ENCODE measurements at regions of chr20 and their contacts with region 1.

Region 1: DNA sequence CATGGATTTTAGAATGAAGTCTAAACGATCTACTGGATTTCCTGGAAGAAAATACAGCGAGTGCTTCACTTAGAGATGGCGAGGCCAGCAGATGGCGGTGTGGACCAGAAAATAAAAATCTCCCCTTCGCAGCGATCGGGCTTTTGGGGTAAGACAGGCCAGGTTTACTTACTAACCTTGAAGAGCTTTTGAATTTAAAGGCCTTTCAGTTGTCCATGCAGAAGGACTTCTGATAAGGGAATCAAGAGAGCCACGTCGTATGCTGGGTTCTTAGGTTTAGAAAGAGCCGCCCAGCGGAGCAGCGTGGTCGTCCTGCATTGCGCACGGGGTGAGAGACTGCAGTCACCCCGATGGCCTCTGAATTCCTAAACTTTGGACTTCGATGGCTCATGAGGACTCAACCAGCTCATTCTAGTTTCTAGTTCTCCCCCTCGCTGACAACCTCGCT is 125.2 kb upstream of the RALGAPA2 start:
- DNase-seq: peak; percentile 59
- H3K4me3 ChIP-seq: no peak overlapping the region
- H3K27ac ChIP-seq: no peak overlapping the region
- H3K4me1 ChIP-seq: no peaks in the 10 kb centered on the region
- H3K27me3 ChIP-seq: peaks cover 0 to 3% of the 10 kb centered on the region in 2 experiments
- CTCF ChIP-seq: peak; percentile 64 to 77
- POLR2A ChIP-seq: no peak

Region 2: DNA sequence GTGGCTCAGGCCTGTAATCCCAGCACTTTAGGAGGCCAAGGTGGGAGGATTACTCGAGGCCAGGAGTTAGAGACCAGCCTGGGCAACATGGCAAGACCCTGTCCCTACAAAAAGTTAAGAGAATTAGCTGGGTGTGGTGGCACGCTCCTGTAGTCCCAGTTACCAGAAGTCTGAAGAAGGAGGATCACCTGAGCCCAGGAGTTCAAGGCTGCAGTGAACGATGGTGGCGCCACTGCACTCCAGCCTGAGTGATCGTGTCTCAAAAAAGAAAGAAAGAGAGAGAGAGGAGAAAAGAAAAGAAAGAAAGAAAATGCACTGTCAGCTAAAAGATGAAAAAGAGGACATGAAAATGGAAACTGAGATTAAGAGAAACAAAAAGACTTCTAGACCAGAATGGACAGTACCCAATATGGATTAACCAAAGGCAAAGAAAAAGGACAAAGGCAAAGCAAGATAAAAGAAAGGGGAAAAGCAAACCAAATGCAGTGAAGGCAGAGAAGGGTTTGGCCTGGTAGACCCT is 116.2 kb before region 1 on chr20:
- CTCF ChIA-PET with region 1: no interaction called
- POLR2A ChIA-PET with region 1: no interaction called
- dilution Hi-C with region 1: no loop called
- intact Hi-C with region 1: no loop called
- DNase-seq: no peak
- H3K4me3 ChIP-seq: no peak overlapping the region
- H3K27ac ChIP-seq: no peak overlapping the region
- H3K4me1 ChIP-seq: no peaks in the 10 kb centered on the region
- H3K27me3 ChIP-seq: no peaks in the 10 kb centered on the region
- CTCF ChIP-seq: no peak
- POLR2A ChIP-seq: no peak

Region 3: DNA sequence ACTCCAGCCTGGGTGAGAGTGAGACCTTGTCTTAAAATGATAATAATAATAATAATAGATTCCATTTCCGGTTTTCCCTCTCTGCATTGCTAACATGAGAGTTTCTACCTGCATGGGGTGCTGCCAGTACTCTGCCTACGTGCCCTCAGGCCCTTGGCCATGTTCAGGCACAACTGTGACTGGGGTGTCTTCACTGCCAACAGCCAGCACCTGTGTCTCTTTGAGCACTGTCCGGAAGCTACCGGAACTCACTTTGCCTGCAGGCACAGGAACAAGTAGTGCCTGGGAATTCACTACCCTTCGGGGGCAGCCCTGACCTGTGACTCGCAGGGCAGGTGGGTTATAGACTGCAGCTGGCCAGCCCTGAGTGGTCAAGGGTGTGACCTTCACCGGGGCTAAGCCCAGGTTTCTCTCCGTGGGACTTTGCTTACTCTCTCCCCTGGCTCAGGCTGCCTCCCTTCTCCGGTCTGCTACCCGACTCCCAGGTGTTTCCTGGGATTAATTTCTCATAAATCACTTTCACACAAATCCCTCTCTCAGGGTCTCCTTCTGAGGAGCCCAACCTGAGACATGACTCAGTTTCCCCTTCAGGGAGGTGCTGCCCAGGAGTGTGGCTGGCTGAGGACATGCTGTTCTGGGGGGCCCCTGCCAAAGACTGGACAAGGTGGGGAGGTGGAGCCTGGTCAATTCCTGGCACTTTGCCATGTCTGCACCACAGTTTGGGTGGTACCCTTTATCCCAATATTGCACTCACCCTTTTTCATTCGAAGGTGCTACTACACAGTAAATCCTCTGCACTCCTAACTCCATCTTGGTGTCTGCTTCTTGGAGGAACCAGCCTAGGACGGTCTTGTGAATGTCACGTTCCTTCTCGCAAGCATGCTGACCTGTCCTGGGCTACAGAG is 45.7 kb before region 1 on chr20:
- CTCF ChIA-PET with region 1: no interaction called
- POLR2A ChIA-PET with region 1: no interaction called
- dilution Hi-C with region 1: no loop called
- intact Hi-C with region 1: no loop called
- DNase-seq: no peak
- H3K4me3 ChIP-seq: no peak overlapping the region
- H3K27ac ChIP-seq: no peak overlapping the region
- H3K4me1 ChIP-seq: no peaks in the 10 kb centered on the region
- H3K27me3 ChIP-seq: peaks cover 6 to 11% of the 10 kb centered on the region in 2 experiments
- CTCF ChIP-seq: no peak
- POLR2A ChIP-seq: no peak

Region 4: GRCh38 chr20:21048841-21049273 is 211.3 kb after region 1 on chr20:
- CTCF ChIA-PET with region 1: interaction called, 3 read pairs
- POLR2A ChIA-PET with region 1: no interaction called
- dilution Hi-C with region 1: no loop called
- intact Hi-C with region 1: loop called (anchors 1 kb)
- DNase-seq: peak; percentile 10
- H3K4me3 ChIP-seq: no peak overlapping the region
- H3K27ac ChIP-seq: no peak overlapping the region
- H3K4me1 ChIP-seq: no peaks in the 10 kb centered on the region
- H3K27me3 ChIP-seq: peaks cover 0 to 2% of the 10 kb centered on the region in 2 experiments
- CTCF ChIP-seq: peak; percentile 73 to 81
- POLR2A ChIP-seq: no peak

Region 5: GRCh38 chr20:21571841-21572690 is 734.5 kb after region 1 on chr20:
- CTCF ChIA-PET with region 1: interaction called, 41 read pairs
- POLR2A ChIA-PET with region 1: no interaction called
- dilution Hi-C with region 1: no loop called
- intact Hi-C with region 1: loop called (anchors 1 kb)
- DNase-seq: peak; percentile 18
- H3K4me3 ChIP-seq: no peak overlapping the region
- H3K27ac ChIP-seq: no peak overlapping the region
- H3K4me1 ChIP-seq: no peaks in the 10 kb centered on the region
- H3K27me3 ChIP-seq: no peaks in the 10 kb centered on the region
- CTCF ChIP-seq: peak; percentile 63 to 85
- POLR2A ChIP-seq: no peak

Region 6: GRCh38 chr20:21615617-21616080 is 778.1 kb after region 1 on chr20:
- CTCF ChIA-PET with region 1: interaction called, 29 read pairs
- POLR2A ChIA-PET with region 1: no interaction called
- dilution Hi-C with region 1: no loop called
- intact Hi-C with region 1: no loop called
- DNase-seq: peak; percentile 39
- H3K4me3 ChIP-seq: no peak overlapping the region
- H3K27ac ChIP-seq: no peak overlapping the region
- H3K4me1 ChIP-seq: no peaks in the 10 kb centered on the region
- H3K27me3 ChIP-seq: no peaks in the 10 kb centered on the region
- CTCF ChIP-seq: peak; percentile 54 to 81
- POLR2A ChIP-seq: no peak